ENCODE measurements at regions of chr12 and their contacts with region 1.

Region 1: DNA sequence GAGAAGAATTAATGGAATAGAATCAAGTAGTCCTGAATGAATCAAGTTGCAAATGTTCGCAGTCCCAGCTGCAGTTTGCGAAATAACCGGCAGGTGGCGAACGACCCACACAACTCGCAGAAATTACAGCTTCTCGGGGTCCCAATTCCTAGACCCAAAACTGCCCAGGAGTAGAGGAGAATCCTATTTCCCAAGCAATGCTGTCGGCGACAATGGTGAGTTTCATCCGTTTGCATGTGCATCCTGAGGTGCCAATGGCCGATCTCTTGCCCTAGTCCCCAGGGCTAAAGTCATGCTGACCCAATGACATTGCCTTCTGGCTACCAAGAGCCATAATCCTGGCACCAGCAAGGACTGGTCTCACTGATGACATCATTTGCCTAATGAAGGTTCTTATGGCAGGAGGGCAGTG is 8.5 kb upstream of the ASCL1 start:
- DNase-seq: peak in 1 of 4 donors; percentile 38
- ATAC-seq: peak; percentile 32
- H3K4me3 ChIP-seq: no peak overlapping the region
- H3K27ac ChIP-seq: no peak overlapping the region
- H3K4me1 ChIP-seq: no peaks in the 10 kb centered on the region
- H3K27me3 ChIP-seq: peaks cover 28 to 68% of the 10 kb centered on the region in 2 donors
- CTCF ChIP-seq: peak; percentile 76 to 78

Region 2: GRCh38 chr12:102883204-102883799 is 65.6 kb before region 1 on chr12:
- intact Hi-C with region 1: no loop called
- DNase-seq: peak in 3 of 4 donors; percentile 31 to 48 (median 41)
- ATAC-seq: peak; percentile 83
- H3K4me3 ChIP-seq: no peak overlapping the region
- H3K27ac ChIP-seq: no peak overlapping the region
- H3K4me1 ChIP-seq: no peaks in the 10 kb centered on the region
- H3K27me3 ChIP-seq: peaks cover 0 to 24% of the 10 kb centered on the region in 2 donors
- CTCF ChIP-seq: peak; percentile 67 to 73

Region 3: DNA sequence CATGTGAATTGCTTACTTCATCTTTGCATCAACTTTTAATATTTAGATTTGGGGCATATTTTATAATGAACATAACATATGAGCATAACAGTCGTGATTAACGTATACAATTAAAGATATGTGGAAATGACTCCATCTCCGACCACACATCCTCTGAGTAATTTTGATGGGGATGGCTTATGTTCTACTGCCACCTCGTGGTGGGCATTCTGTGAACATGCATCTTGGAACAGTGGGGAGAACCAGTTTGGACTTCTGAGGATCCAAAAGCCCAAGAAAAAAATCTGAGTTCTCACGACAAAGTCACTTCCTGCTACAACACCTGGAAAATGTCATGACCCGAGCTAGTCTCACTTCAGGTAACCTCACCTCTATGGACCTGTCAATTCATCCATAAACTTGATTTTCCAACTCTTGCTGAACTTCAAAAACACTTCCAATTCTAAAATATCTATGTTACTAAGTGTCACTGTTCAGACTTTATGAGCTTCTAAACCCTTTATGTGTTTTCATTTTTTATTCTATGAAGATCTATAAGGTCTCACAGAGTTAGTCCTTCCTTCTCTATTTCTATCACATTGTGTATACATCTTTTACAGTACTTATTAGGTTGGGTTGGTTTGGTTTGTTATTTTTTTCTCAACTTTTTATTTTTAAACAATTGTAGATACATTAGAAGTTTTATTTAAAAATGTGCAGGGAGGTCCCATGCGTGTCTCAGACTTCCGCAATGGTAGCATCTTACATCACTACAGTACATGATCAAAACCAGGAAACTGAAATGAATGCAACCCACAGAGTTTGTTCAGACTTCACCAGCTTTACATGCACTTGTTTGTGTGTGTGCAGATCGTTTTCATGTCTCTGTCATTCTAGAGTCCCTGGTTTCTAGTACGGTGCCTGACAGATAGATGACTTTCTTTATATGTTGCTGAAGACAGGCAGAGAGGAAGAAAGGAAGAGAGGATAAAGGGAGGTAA is 600.0 kb after region 1 on chr12:
- intact Hi-C with region 1: loop called in 1 of 2 experiments (anchors 5 kb)
- DNase-seq: peak in 2 of 4 donors; percentile 49 to 72
- ATAC-seq: peak; percentile 82
- H3K4me3 ChIP-seq: no peak overlapping the region
- H3K27ac ChIP-seq: no peak overlapping the region
- H3K4me1 ChIP-seq: no peaks in the 10 kb centered on the region
- H3K27me3 ChIP-seq: peaks cover 2 to 7% of the 10 kb centered on the region in 2 donors
- CTCF ChIP-seq: peak; percentile 72 to 78